Transverse colon (tissue), 4 donors: ENCODE measurements at regions of chr7 and their contacts with region 1.

Region 1: GRCh38 chr7:152564656-152565250 is 111.2 kb downstream of the XRCC2 start:
- DNase-seq: no peak
- H3K4me3 ChIP-seq: no peak overlapping the region
- H3K27ac ChIP-seq: no peak overlapping the region
- H3K4me1 ChIP-seq: no peaks in the 10 kb centered on the region
- H3K27me3 ChIP-seq: no peaks in the 10 kb centered on the region
- CTCF ChIP-seq: no peak
- EP300 ChIP-seq: no peak
- POLR2A ChIP-seq: no peak

Region 2: GRCh38 chr7:152522571-152523067 is 42.1 kb before region 1 on chr7:
- in situ Hi-C with region 1: no loop called
- intact Hi-C with region 1: loop called (anchors 1 kb)
- DNase-seq: no peak
- H3K4me3 ChIP-seq: peak overlapping the region in 1 of 4 donors; percentile 1
- H3K27ac ChIP-seq: no peak overlapping the region
- H3K4me1 ChIP-seq: peaks cover 0 to 13% (median 6%) of the 10 kb centered on the region in 4 donors
- H3K27me3 ChIP-seq: no peaks in the 10 kb centered on the region
- CTCF ChIP-seq: no peak
- EP300 ChIP-seq: no peak
- POLR2A ChIP-seq: no peak